Dendritic cell treated with granulocyte-macrophage colony-stimulating factor and Interleukin-4, amounts not matched to agents 40 ng/mL and 50 ng/mL, for 4 days (primary cell): ENCODE measurements at regions of chr11 and their contacts with region 1.

Region 1: GRCh38 chr11:17978553-17979287 is 34.1 kb downstream of the SERGEF start:
- H3K4me3 Mint-ChIP-seq: no peak overlapping the region
- H3K27ac Mint-ChIP-seq: no peak overlapping the region
- H3K4me1 Mint-ChIP-seq: no peaks in the 10 kb centered on the region
- H3K27me3 Mint-ChIP-seq: no peaks in the 10 kb centered on the region

Region 2: DNA sequence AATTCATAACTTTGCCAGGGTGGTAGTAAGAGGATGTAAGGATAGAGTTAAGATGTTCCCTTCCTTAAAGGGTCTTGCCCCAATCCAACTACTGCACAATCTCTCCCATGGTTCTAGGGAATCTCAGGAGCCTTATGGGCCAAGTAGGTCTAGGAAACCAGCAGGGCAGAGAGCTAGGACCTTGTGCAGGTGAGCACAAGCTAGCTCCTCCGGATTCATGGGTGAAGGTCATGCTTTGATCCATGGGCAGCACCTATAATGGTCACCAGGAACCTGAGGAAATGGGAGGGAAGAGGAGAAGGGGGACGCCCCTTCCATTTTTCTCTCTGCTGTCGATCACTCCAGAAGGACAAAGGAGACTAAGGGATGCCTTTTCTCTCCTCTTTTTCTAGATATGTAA is 607.1 kb before region 1 on chr11:
- intact Hi-C with region 1: no loop called
- H3K4me3 Mint-ChIP-seq: no peak overlapping the region
- H3K27ac Mint-ChIP-seq: no peak overlapping the region
- H3K4me1 Mint-ChIP-seq: no peaks in the 10 kb centered on the region
- H3K27me3 Mint-ChIP-seq: no peaks in the 10 kb centered on the region

Region 3: DNA sequence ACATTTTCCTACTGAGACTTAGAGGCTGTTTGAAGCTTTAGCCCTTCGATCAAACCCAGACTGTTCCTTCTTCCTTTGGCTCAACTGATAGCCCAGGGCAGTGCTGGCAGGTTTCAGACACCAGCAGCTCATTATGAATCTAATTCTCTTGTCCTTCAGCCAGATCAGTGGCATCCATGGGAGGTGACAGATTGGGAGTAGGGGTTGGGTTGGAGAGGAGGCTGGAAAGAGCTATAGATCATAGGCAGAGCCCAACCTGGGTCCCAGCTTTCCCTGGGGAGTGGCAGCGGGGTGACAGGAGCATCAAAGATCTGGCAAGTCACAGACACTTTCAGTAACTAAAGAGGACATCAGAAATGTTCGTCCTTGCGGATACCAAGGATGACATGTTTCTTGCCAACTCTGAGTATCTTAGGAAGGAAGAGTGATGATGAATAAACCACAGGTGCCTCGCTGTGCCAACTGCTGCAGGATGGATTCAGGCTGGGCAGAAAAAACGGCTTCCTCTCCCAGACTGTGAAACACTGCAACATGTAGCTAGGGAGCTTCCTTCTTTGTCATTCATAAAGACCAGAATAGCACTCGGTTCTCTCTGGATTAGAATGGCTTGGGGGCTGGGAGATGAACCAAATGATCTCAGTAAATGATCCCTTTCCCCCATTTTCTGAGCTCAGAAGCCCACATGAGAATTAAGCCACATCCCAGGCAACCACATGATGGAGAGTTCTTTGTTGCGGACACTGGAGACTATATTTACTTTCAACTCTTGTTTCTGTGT is 521.1 kb before region 1 on chr11:
- intact Hi-C with region 1: no loop called
- H3K4me3 Mint-ChIP-seq: no peak overlapping the region
- H3K27ac Mint-ChIP-seq: no peak overlapping the region
- H3K4me1 Mint-ChIP-seq: no peaks in the 10 kb centered on the region
- H3K27me3 Mint-ChIP-seq: no peaks in the 10 kb centered on the region

Region 4: DNA sequence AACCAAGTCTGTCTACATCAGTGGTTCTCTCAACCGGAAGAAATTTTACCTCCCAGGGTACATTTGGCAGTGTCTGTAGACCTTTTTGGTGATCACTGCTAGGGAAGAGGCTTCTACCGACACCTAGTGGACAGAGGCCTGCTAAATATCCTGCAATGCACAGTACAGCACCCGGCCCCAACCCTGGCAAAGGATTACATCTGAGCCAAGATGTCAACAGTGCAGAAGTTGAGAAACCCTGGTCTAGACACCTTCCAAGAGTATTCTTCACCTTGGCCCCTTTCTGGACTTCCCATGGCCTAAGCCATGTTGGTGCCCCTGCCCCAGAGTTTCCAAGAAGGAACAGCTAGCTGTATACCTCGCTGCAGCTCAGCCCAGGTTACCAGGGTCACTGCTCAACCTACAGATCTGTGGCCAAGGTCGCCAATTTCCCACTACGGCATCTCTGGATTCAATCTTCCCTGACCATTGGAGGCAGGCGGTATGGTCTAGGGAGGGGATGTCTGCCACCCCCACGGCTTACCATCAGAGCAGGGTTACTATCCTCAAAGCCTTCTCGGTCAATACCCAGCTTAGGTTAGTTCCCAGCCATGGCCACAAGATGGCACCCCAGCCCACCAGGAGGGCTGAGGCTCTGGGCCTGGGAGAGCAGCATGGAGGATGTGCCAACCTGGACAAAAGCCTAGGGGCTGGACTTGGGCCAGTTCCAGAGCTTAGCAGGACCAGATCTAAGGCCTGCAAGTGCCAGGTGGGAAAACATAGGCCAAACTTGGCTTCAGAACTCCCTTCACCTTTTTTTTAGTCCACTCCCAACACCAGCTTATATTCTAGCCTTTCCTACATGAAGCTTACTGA is 247.9 kb before region 1 on chr11:
- intact Hi-C with region 1: loop called (anchors 1 kb)
- H3K4me3 Mint-ChIP-seq: no peak overlapping the region
- H3K27ac Mint-ChIP-seq: no peak overlapping the region
- H3K4me1 Mint-ChIP-seq: no peaks in the 10 kb centered on the region
- H3K27me3 Mint-ChIP-seq: peaks cover 49% of the 10 kb centered on the region

Region 5: GRCh38 chr11:17760102-17761029 is 218.4 kb before region 1 on chr11:
- intact Hi-C with region 1: loop called (anchors 1 kb)
- H3K4me3 Mint-ChIP-seq: no peak overlapping the region
- H3K27ac Mint-ChIP-seq: no peak overlapping the region
- H3K4me1 Mint-ChIP-seq: no peaks in the 10 kb centered on the region
- H3K27me3 Mint-ChIP-seq: peaks cover 1% of the 10 kb centered on the region

Region 6: GRCh38 chr11:18012863-18013781 is 34.4 kb after region 1 on chr11 and contains the start of gene SERGEF:
- intact Hi-C with region 1: no loop called
- H3K4me3 Mint-ChIP-seq: peak within 1 kb of the TSS; percentile 98
- H3K27ac Mint-ChIP-seq: peak within 1 kb of the TSS; percentile 88
- H3K4me1 Mint-ChIP-seq: peaks cover 39% of the 10 kb centered on the region
- H3K27me3 Mint-ChIP-seq: peaks cover 10% of the 10 kb centered on the region